Left lung (tissue), 14 donors: ENCODE measurements at regions of chr12 and their contacts with region 1.

Region 1: GRCh38 chr12:130916251-130916911 is 37.3 kb upstream of the ADGRD1 start:
- DNase-seq: peak in 3 of 4 donors; percentile 48 to 86 (median 78)
- ATAC-seq: peak; percentile 92
- H3K4me3 ChIP-seq: peak overlapping the region in 1 of 2 donors; percentile 21
- H3K27ac ChIP-seq: no peak overlapping the region
- H3K4me1 ChIP-seq: peaks cover 0 to 12% of the 10 kb centered on the region in 2 donors
- H3K27me3 ChIP-seq: peaks cover 0 to 25% of the 10 kb centered on the region in 2 donors
- CTCF ChIP-seq: peak; percentile 47 to 96

Region 2: DNA sequence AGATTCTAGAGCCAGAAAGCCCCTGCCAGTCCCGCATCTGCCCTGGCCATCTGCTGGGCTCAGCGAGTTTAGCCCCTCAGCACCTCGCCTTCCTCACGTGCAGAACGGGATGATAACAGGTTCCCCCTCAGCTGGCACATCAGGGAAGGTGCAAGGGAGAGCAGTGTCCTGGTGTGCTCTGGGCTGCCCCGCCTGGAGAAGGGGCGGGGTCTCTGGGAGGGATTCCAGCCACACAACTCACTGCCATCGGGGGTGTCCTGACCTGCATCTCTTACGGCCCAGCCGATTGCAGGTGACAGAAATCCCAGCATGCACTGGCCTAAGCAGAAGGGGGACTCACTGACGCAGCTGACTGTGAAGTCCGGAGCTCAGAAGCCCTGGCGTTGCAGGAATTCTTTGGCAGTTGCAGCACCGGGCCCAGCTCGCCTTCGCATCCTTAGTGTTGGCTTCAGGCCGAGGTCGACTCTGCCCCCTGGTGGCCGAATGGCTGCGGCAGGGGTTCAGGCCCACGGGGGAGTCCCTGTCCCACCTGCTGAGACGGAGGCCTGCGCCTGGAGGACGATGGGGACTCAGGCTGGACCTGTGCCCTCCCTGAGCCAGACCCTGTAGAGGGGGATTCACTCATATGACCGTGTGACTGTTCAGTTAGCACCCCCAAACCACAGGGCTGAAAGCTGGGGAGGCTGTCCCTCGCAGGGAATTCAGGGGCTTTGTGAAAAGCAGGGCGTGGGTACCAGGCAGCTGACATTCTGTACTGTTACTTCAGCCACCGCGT is 215.9 kb after region 1 on chr12:
- intact Hi-C with region 1: loop called in 1 of 2 experiments (anchors 10 kb)
- DNase-seq: peak in 3 of 4 donors; percentile 56 to 87 (median 75)
- ATAC-seq: peak; percentile 64
- H3K4me3 ChIP-seq: no peak overlapping the region
- H3K27ac ChIP-seq: no peak overlapping the region
- H3K4me1 ChIP-seq: no peaks in the 10 kb centered on the region
- H3K27me3 ChIP-seq: no peaks in the 10 kb centered on the region
- CTCF ChIP-seq: peak; percentile 46 to 77